Activated naive CD4-positive, alpha-beta T cell treated with anti-CD3 and anti-CD28 coated beads for 36 hours (primary cell): ENCODE measurements at regions of chr2 and their contacts with region 1.

Region 1: DNA sequence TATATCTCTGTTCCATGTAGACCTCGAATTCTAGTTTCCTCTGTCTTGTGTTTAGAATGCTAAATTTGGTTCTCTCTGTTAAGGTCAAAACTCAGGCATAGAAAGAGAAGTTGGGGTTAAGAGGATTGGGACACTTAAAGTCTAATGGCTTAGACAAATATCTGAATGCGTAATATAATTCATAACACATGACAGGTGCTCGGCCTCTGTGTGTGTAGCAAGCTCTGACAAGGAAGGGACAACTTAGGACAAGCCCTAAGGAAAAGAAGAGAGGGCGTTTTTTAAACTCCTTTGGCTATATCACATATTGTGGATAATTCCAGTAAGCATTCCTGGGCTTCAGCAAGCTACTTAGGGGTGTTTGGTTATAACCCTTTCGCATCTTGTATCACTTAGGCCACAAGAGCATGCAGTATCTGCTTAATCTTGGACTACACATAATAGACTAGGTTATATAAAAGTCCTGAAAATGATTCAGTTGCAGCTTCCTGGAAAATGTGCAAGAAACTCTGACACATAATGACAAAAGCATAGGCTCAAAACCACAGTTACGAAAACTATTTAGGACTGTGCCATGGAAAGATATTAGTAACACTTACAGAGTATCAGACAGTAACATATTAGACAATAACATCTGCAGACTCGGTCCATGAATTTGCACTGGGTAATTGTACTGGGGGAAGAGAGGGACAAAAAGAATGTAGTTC is 16.1 kb upstream of the CREB1 start:
- DNase-seq: no peak
- H3K4me3 Mint-ChIP-seq: no peak overlapping the region
- H3K27ac Mint-ChIP-seq: peak overlapping the region; percentile 77
- H3K4me1 Mint-ChIP-seq: peaks cover 39% of the 10 kb centered on the region
- H3K27me3 Mint-ChIP-seq: no peaks in the 10 kb centered on the region

Region 2: GRCh38 chr2:207352978-207353671 is 160.6 kb before region 1 on chr2:
- CTCF ChIA-PET with region 1: no interaction called
- intact Hi-C with region 1: no loop called
- DNase-seq: peak; percentile 65
- H3K4me3 Mint-ChIP-seq: no peak overlapping the region
- H3K27ac Mint-ChIP-seq: no peak overlapping the region
- H3K4me1 Mint-ChIP-seq: peaks cover 8% of the 10 kb centered on the region
- H3K27me3 Mint-ChIP-seq: no peaks in the 10 kb centered on the region

Region 3: GRCh38 chr2:207503234-207503633 is 10.5 kb before region 1 on chr2:
- CTCF ChIA-PET with region 1: interaction called, 4 read pairs
- intact Hi-C with region 1: loop called (anchors 1 kb)
- DNase-seq: no peak
- H3K4me3 Mint-ChIP-seq: no peak overlapping the region
- H3K27ac Mint-ChIP-seq: no peak overlapping the region
- H3K4me1 Mint-ChIP-seq: peaks cover 47% of the 10 kb centered on the region
- H3K27me3 Mint-ChIP-seq: no peaks in the 10 kb centered on the region